ENCODE measurements at regions of chr5 and their contacts with region 1.

Region 1: GRCh38 chr5:152534641-152535040 is 129.6 kb upstream of the NMUR2 start:
- DNase-seq: no peak
- H3K4me3 ChIP-seq: no peak overlapping the region
- CTCF ChIP-seq: no peak
- POLR2A ChIP-seq: no peak

Region 2: GRCh38 chr5:153964880-153965645 is 1430.4 kb after region 1 on chr5:
- intact Hi-C with region 1: loop called (anchors 2 kb)
- DNase-seq: peak in 1 of 2 donors; percentile 37
- H3K4me3 ChIP-seq: no peak overlapping the region
- CTCF ChIP-seq: peak in 1 of 3 donors; percentile 41
- POLR2A ChIP-seq: no peak

Measured in lower leg skin (tissue), 4 donors.